Dorsolateral prefrontal cortex (tissue), 120 donors: ENCODE measurements at regions of chr3 and their contacts with region 1.

Region 1: GRCh38 chr3:187223799-187224198 is 26.5 kb downstream of the RTP1 start:
- DNase-seq: no peak
- H3K4me3 ChIP-seq: no peak overlapping the region
- H3K27ac ChIP-seq: no peak overlapping the region
- H3K27me3 ChIP-seq: no peaks in the 10 kb centered on the region
- CTCF ChIP-seq: no peak

Region 2: GRCh38 chr3:187295316-187296034 is 71.7 kb after region 1 on chr3:
- intact Hi-C with region 1: loop called in 1 of 2 experiments (anchors 5 kb)
- DNase-seq: no peak
- H3K4me3 ChIP-seq: no peak overlapping the region
- H3K27ac ChIP-seq: no peak overlapping the region
- H3K27me3 ChIP-seq: no peaks in the 10 kb centered on the region
- CTCF ChIP-seq: peak in 36 of 56 donors; percentile 8 to 47 (median 27)

Region 3: DNA sequence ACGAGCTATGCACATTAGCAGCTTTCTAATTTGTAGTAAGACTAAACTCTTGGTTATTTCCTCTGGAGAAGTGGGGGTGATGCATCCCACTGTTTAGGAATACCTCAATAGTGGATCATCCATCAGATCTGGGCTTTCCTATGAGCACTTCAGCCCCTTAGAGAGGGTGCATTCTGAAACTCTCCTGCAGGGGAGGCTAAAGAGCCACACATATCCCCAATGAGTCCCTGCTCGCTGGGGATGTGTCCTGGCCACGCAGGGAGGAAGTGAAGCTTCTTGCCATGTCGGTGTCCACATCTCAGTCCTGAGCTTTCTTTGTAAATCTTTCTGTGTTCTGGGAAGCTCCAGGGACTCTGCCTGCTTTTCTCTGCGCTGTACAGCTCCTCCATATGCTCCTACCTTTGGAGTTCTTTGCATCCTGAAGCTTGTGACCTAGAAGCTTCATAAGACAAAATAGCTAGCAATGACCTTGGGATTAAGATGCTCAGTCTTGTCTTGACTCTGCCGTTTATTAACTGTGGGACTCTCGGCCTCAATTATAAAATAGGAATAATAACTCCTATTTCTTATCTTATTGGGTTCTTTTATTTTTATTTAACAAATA is 96.0 kb after region 1 on chr3:
- intact Hi-C with region 1: loop called in 1 of 2 experiments (anchors 2 kb)
- DNase-seq: peak; percentile 32 to 86 (median 65)
- H3K4me3 ChIP-seq: peak overlapping the region in 25 of 59 donors; percentile 25 to 64 (median 50)
- H3K27ac ChIP-seq: no peak overlapping the region
- H3K27me3 ChIP-seq: peaks cover 0 to 16% (median 0%) of the 10 kb centered on the region in 45 donors
- CTCF ChIP-seq: peak; percentile 52 to 97 (median 89)

Region 4: DNA sequence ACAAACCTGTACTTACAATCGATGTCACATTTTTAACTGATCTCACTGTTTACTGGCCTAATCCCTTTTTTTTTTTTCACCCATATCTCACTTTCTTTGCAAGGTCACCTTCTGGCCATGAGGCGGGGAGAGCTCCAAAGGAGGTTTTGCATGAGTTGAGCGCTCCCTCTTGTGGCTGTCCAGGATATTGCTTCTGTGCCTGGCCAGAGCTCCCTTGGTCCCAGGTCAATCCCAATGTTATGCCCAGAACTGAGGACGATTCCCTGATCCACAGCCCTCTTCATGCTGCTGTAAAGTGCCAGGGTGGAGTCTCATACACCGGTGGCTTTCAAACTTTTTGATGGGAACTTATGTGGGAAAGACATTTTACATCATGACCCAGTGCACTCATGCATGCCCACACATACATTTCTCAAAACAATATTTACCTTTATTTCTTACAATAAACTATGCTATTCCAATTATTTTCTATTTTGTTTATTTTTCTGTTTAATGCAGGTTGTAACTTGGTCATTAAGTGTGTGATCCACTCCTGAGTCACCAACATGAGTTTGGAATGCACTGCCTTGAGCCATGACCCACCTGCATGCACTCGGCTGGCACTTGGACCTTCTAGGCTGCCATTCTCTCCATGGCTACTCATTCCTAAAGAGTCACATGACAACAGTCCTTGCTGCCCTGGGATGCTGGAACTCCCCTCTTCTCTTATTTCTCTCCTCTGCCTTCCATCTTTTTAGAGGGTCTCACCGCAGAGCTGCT is 456.0 kb after region 1 on chr3:
- intact Hi-C with region 1: loop called (anchors 2 to 5 kb)
- DNase-seq: peak; percentile 43 to 83 (median 70)
- H3K4me3 ChIP-seq: no peak overlapping the region
- H3K27ac ChIP-seq: no peak overlapping the region
- H3K27me3 ChIP-seq: peaks cover 0 to 19% (median 3%) of the 10 kb centered on the region in 45 donors
- CTCF ChIP-seq: peak; percentile 62 to 98 (median 94)

Region 5: DNA sequence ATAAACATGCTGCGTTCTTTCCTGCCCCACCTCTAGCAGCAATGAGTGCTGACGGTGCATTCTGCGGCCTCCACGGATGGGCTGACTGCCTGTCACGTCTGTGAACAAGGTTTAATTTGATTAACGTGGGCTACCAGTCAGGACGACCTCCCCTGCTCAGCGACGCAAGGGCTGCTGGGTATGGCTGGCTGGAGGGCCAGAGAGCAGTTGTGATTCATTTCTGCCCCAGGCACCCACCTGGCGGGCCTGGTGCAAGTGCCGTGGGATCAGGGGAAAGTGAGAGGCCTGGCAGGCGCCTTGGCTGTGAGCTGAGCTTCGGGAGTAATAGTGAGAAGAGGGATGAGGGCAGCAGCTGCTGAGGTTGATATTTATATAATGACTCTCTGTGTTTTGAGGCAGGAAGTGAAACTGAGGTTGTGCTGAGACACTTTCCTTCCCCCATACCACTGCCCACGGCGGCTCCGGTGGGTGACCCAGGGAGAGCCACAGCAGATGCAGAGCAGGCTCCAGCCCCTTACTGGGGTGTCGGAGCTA is 711.9 kb after region 1 on chr3:
- intact Hi-C with region 1: no loop called
- DNase-seq: no peak
- H3K4me3 ChIP-seq: no peak overlapping the region
- H3K27ac ChIP-seq: no peak overlapping the region
- H3K27me3 ChIP-seq: peaks cover 0 to 3% (median 0%) of the 10 kb centered on the region in 45 donors
- CTCF ChIP-seq: no peak